Caco-2 (cell line): ENCODE measurements at regions of chr1 and their contacts with region 1.

Region 1: GRCh38 chr1:89837036-89837481 is 16.2 kb downstream of the LRRC8D start:
- DNase-seq: peak in 1 of 2 experiments; percentile 39
- H3K4me3 ChIP-seq: no peak overlapping the region
- H3K4me3 Mint-ChIP-seq: peak overlapping the region; percentile 69
- H3K27ac Mint-ChIP-seq: peak overlapping the region; percentile 76
- H3K4me1 ChIP-seq: peaks cover 52% of the 10 kb centered on the region
- H3K4me1 Mint-ChIP-seq: peaks cover 42% of the 10 kb centered on the region
- H3K27me3 ChIP-seq: no peaks in the 10 kb centered on the region
- H3K27me3 Mint-ChIP-seq: no peaks in the 10 kb centered on the region
- CTCF ChIP-seq: no peak

Region 2: DNA sequence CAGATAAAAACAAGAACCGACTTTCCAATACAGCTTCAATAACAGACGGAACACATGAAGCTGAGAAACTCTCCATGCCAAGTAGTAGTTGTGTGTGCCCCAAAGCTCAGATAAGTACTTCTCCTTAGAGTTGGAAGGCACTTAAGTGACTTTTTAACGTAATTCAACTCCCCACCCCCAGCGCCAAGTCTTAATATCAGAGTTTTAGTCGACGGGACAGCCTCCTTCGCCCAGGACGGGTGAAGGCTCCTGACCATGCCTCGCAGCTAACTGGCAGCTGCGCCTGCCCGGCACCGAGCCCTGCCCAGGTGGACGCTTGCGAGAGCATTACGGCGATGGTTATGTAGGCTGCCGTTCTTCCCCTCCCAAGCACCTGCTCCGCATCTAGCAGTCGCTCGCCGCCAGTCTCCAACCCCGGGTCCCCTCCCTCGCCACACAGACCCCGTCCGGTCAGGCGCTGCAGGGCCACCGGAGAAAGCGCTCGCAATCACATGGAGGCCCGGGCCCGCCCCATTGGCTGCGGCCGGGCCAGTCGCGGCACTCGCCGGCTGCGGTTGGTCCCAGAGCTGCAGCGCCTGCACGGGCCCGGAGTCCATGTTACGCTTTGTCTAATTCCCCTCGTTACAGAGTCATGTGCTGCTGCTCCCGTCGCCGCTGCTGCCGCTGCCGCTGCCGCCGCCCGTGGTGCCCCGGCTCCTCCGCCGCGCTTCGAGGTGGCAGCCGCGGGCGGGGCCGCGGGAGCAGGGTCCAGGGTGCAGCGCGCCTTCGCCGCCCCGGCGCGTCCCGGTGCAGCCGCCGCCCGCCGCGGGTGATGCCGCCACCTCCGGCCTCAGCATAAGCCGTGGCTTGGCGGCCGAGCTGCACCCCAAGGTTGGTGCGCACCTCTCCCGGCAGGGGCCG is 16.4 kb before region 1 on chr1 and contains the start of gene LRRC8D:
- CTCF ChIA-PET with region 1: no interaction called
- POLR2A ChIA-PET with region 1: no interaction called
- intact Hi-C with region 1: loop called (anchors 1 kb)
- DNase-seq: peak; percentile 83 to 87
- H3K4me3 ChIP-seq: peak within 1 kb of the TSS; percentile 82
- H3K4me3 Mint-ChIP-seq: peak within 1 kb of the TSS; percentile 92
- H3K27ac Mint-ChIP-seq: peak within 1 kb of the TSS; percentile 90
- H3K4me1 ChIP-seq: peaks cover 14% of the 10 kb centered on the region
- H3K4me1 Mint-ChIP-seq: peaks cover 22% of the 10 kb centered on the region
- H3K27me3 ChIP-seq: no peaks in the 10 kb centered on the region
- H3K27me3 Mint-ChIP-seq: no peaks in the 10 kb centered on the region
- CTCF ChIP-seq: no peak
- total RNA-seq, gene LRRC8D: 34.4 and 39.4 TPM in 2 replicates

Region 3: GRCh38 chr1:89884718-89885596 is 47.9 kb after region 1 on chr1:
- CTCF ChIA-PET with region 1: no interaction called
- POLR2A ChIA-PET with region 1: no interaction called
- intact Hi-C with region 1: no loop called
- DNase-seq: no peak
- H3K4me3 ChIP-seq: no peak overlapping the region
- H3K4me3 Mint-ChIP-seq: no peak overlapping the region
- H3K27ac Mint-ChIP-seq: no peak overlapping the region
- H3K4me1 ChIP-seq: peaks cover 15% of the 10 kb centered on the region
- H3K4me1 Mint-ChIP-seq: peaks cover 11% of the 10 kb centered on the region
- H3K27me3 ChIP-seq: no peaks in the 10 kb centered on the region
- H3K27me3 Mint-ChIP-seq: no peaks in the 10 kb centered on the region
- CTCF ChIP-seq: no peak